MCF 10A (cell line): ENCODE measurements at regions of chr1 and their contacts with region 1.

Region 1: DNA sequence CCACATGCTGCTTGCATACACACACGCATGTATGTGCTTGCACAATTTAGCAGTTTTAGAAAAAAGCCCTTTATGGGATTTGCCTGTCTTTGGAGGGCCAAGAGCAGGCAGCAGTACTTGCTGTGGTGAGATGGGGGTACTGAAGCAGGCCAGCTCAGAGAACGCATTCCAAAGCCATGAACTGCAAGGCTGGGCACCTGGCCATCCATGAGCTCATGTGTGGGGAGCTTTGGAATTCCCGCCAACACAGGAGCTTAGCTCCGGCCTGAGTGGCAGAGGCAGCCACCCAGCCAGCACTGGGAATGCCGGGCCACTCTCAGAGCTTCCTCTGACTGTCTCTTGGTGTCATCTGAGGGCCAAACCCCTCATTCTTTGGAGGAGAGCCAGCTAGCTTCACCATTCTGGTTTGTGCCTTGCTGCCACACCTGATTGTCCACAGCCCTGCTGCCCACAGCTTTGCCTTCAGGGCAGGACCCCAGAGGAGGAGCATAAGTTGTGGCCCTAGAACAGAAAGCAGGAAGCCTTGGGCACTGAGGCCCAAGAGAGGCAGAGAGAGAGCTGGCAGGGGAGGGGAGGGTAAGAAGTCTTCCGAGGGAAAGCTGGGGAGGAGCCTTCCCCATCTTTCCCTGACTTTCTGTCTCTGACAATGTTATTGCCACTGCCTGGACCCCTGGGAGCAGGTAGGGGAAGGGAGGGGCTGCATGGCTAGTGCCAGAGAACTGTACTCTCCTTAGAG is 92.1 kb upstream of the POU3F1 start:
- DNase-seq: peak; percentile 96
- H3K4me3 Mint-ChIP-seq: peak overlapping the region; percentile 24
- H3K27ac Mint-ChIP-seq: no peak overlapping the region
- H3K4me1 Mint-ChIP-seq: peaks cover 25% of the 10 kb centered on the region
- H3K27me3 Mint-ChIP-seq: peaks cover 15% of the 10 kb centered on the region
- CTCF ChIP-seq: no peak

Region 2: DNA sequence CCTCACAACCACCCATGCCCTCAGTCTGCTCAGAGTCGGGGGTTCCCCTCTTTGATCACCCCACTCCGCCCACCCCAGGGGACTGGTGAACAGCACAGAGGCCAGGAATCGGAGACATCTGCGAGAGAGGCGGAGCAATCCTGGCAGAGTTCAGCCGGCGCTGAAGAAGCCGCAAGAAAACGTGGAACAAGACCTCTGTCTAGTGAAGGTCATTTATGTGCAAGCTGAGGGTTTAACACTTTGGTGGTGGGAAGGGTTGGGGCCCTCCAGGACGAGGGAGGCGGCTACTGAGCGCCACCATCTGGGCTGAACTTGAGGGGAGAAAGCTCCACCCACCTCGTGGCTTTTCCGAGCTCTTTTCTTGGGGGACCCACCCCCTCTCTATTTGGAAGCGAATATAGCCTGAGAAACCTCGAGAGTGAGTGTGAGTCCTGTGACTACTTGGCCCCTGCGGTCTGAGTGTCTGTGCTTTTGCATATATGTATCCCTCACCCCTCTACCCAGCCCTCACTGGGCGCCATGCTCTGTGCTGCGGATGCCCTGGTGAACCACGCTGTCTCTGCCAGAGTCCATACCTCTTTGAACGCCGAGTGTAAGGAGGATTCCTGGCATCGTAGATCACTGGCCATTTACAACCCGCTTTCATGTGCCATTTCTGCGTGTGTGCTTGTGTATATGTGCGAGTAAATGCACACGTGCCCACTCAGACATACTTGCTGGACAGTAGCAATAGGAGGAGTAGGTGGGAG is 372.6 kb before region 1 on chr1:
- CTCF ChIA-PET with region 1: no interaction called
- POLR2A ChIA-PET with region 1: no interaction called
- intact Hi-C with region 1: no loop called
- DNase-seq: peak; percentile 22
- H3K4me3 Mint-ChIP-seq: no peak overlapping the region
- H3K27ac Mint-ChIP-seq: no peak overlapping the region
- H3K4me1 Mint-ChIP-seq: no peaks in the 10 kb centered on the region
- H3K27me3 Mint-ChIP-seq: peaks cover 92% of the 10 kb centered on the region
- CTCF ChIP-seq: no peak

Region 3: GRCh38 chr1:38117444-38117887 is 21.2 kb before region 1 on chr1:
- CTCF ChIA-PET with region 1: interaction called, 5 read pairs
- POLR2A ChIA-PET with region 1: interaction called, 18 read pairs
- intact Hi-C with region 1: no loop called
- DNase-seq: peak; percentile 94
- H3K4me3 Mint-ChIP-seq: no peak overlapping the region
- H3K27ac Mint-ChIP-seq: peak overlapping the region; percentile 27
- H3K4me1 Mint-ChIP-seq: peaks cover 44% of the 10 kb centered on the region
- H3K27me3 Mint-ChIP-seq: no peaks in the 10 kb centered on the region
- CTCF ChIP-seq: no peak

Region 4: DNA sequence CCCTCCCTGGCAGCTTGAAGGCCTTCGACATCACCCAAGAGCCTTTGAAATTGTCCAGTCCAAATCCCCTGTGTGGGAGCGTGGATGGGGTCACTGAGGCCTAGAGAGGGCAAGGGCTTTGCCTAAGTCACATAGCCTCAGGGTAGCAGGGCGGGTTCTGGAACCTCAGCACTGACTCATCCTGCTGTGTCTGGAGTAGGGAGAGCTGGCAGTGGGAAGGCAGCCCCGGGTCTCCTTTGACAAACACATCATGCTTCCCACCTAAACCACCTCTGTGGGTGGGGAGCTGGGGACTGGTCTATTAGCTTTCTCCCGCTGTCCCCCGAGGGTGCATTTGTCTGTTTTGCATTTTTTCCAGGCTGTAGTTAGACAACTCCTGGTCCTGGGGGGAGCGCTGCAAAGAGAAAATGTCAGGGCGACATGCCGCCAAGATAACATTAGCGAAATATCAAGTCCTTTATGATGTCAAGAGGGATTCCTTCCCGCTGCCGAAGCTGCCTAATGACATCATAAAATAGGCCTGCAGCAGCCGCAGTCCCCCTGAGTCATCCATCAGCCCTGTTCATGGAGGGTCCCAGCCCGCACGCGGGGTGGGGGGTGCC is 15.2 kb before region 1 on chr1:
- CTCF ChIA-PET with region 1: interaction called, 4 read pairs
- POLR2A ChIA-PET with region 1: interaction called, 10 read pairs
- intact Hi-C with region 1: no loop called
- DNase-seq: peak; percentile 82
- H3K4me3 Mint-ChIP-seq: no peak overlapping the region
- H3K27ac Mint-ChIP-seq: no peak overlapping the region
- H3K4me1 Mint-ChIP-seq: peaks cover 49% of the 10 kb centered on the region
- H3K27me3 Mint-ChIP-seq: no peaks in the 10 kb centered on the region
- CTCF ChIP-seq: no peak

Region 5: DNA sequence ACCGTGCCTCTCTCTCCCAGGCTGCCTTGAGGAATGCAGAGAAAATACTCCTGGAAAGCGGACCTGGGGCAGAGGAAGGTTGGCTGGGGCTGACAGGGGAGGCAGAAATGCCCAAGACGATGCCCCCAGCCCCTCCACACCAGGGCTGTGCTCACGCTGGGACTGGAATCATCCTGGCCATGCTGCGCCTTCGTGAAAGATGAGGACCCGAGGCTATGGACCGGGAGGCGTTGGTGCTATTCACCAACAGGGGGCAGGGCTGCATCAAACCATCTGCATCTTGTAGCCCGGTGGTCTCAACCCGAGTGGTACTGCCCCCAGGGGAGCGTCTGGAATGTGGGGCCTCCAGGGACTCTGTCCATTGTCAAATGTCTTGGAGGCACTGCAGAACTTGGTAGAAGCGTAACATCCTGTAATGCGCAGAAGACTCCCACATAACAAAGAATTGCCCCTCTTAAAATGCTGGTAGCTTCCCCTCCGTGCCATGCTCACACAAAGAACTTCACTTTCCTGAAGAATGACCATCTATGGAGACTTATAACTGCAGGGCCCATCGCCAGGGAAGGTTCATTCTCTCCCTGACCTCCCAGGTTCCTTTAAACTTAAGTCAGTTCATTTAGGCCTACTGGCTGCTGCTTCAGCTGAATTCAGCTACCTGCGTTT is 469.7 kb after region 1 on chr1:
- CTCF ChIA-PET with region 1: no interaction called
- POLR2A ChIA-PET with region 1: no interaction called
- intact Hi-C with region 1: no loop called
- DNase-seq: peak; percentile 17
- H3K4me3 Mint-ChIP-seq: no peak overlapping the region
- H3K27ac Mint-ChIP-seq: no peak overlapping the region
- H3K4me1 Mint-ChIP-seq: no peaks in the 10 kb centered on the region
- H3K27me3 Mint-ChIP-seq: no peaks in the 10 kb centered on the region
- CTCF ChIP-seq: peak; percentile 10